ENCODE measurements at regions of chr1 and their contacts with region 1.

Region 1: GRCh38 chr1:147389532-147390524 is 147.3 kb downstream of the CHD1L start:
- DNase-seq: no peak
- ATAC-seq: peak; percentile 84
- H3K4me3 ChIP-seq: no peak overlapping the region
- H3K27ac ChIP-seq: no peak overlapping the region
- H3K4me1 ChIP-seq: no peaks in the 10 kb centered on the region
- H3K27me3 ChIP-seq: no peaks in the 10 kb centered on the region
- CTCF ChIP-seq: peak; percentile 66 to 77 (median 72)
- EP300 ChIP-seq: no peak
- POLR2A ChIP-seq: no peak
- RAD21 ChIP-seq: peak; percentile 69

Region 2: GRCh38 chr1:147377263-147378246 is 12.3 kb before region 1 on chr1:
- CTCF ChIA-PET with region 1: interaction called, 23 read pairs
- POLR2A ChIA-PET with region 1: interaction called, 5 read pairs
- RAD21 ChIA-PET with region 1: interaction called, 3 read pairs
- SMC1A ChIA-PET with region 1: interaction called, 4 read pairs
- in situ Hi-C with region 1: no loop called
- intact Hi-C with region 1: no loop called
- DNase-seq: no peak
- ATAC-seq: no peak
- H3K4me3 ChIP-seq: no peak overlapping the region
- H3K27ac ChIP-seq: no peak overlapping the region
- H3K4me1 ChIP-seq: no peaks in the 10 kb centered on the region
- H3K27me3 ChIP-seq: no peaks in the 10 kb centered on the region
- CTCF ChIP-seq: no peak
- EP300 ChIP-seq: no peak
- POLR2A ChIP-seq: no peak
- RAD21 ChIP-seq: no peak

Region 3: GRCh38 chr1:147640553-147641165 is 250.8 kb after region 1 on chr1:
- CTCF ChIA-PET with region 1: no interaction called
- POLR2A ChIA-PET with region 1: no interaction called
- RAD21 ChIA-PET with region 1: no interaction called
- SMC1A ChIA-PET with region 1: no interaction called
- in situ Hi-C with region 1: no loop called
- intact Hi-C with region 1: no loop called
- DNase-seq: no peak
- ATAC-seq: peak; percentile 100
- H3K4me3 ChIP-seq: no peak overlapping the region
- H3K27ac ChIP-seq: no peak overlapping the region
- H3K4me1 ChIP-seq: no peaks in the 10 kb centered on the region
- H3K27me3 ChIP-seq: no peaks in the 10 kb centered on the region
- CTCF ChIP-seq: peak; percentile 92 to 98 (median 92)
- EP300 ChIP-seq: no peak
- POLR2A ChIP-seq: no peak
- RAD21 ChIP-seq: peak; percentile 57